ENCODE measurements at regions of chr3 and their contacts with region 1.

Region 1: GRCh38 chr3:171200052-171200749 is 173.7 kb upstream of the SLC2A2 start:
- DNase-seq: no peak
- ATAC-seq: no peak
- H3K4me3 ChIP-seq: no peak overlapping the region
- H3K27ac ChIP-seq: peak overlapping the region; percentile 20
- H3K4me1 ChIP-seq: peaks cover 46% of the 10 kb centered on the region
- H3K27me3 ChIP-seq: no peaks in the 10 kb centered on the region
- CTCF ChIP-seq: no peak

Region 2: DNA sequence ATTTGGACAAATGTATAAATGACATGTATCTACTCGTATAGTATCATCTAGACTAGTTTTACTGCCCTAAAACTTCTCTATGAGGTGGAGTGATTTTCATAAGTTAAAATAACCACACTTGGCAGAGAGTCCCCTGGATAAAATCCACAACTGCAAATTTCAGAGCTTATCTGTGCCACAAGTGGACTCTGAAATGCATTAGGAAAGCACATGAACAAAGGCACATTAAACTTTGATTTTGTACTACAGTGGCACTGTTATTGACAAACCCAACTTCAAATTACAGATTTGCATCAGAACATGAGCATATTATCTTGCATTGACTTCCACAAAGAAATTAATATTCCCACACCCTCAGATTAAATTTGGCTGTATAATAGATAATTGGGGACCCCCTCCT is 233.7 kb before region 1 on chr3:
- intact Hi-C with region 1: no loop called
- DNase-seq: no peak
- ATAC-seq: no peak
- H3K4me3 ChIP-seq: no peak overlapping the region
- H3K27ac ChIP-seq: no peak overlapping the region
- H3K4me1 ChIP-seq: no peaks in the 10 kb centered on the region
- H3K27me3 ChIP-seq: no peaks in the 10 kb centered on the region
- CTCF ChIP-seq: no peak

Region 3: DNA sequence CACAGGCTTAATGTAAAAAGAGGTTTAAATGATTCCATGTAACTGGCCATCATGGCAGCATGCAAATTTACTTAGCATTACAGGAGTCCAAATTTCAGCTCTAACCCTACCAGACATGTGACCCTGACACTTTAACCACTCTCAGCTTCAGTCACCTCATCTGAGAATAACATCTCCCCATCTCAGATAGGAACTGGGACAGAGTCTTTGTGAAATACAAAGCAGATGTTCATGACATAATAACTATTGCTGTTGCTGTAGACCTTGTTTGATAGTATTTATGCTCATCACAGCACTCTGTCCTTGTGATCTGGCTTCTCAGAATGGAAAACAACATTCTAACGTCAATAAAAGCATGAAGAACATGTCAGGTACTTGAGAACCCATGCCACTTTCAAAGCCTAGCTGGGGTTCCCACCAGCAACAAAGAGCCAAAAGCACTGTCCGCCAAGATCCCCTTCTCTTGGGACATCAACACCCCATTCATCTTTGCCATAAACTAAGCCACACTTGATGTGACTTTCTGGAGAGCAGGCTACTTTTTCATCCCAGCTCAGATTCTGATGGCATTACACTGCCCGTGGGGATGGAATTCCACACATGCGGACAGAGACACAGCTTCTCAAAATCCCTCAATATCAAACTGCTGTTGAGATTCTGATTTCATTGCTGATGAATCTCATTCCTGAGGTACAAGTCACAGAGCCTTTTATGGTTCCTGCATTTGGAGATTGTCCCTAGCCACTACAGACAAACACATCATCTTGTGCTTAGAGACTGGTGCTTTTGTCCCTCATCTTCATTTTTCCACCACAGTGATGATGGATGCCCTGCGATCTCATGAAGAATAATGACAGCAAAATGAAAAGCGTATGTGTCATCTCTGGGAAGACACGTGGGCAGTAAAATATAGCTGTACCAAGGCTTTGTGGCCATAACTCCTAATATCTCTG is 57.3 kb after region 1 on chr3:
- intact Hi-C with region 1: loop called in 1 of 2 experiments (anchors 5 kb)
- DNase-seq: no peak
- ATAC-seq: peak; percentile 79 to 87 (median 83)
- H3K4me3 ChIP-seq: no peak overlapping the region
- H3K27ac ChIP-seq: peak overlapping the region; percentile 84
- H3K4me1 ChIP-seq: peaks cover 33% of the 10 kb centered on the region
- H3K27me3 ChIP-seq: no peaks in the 10 kb centered on the region
- CTCF ChIP-seq: no peak

Measured in psoas muscle (tissue), 8 donors.